ENCODE measurements at regions of chr3 and their contacts with region 1.

Region 1: DNA sequence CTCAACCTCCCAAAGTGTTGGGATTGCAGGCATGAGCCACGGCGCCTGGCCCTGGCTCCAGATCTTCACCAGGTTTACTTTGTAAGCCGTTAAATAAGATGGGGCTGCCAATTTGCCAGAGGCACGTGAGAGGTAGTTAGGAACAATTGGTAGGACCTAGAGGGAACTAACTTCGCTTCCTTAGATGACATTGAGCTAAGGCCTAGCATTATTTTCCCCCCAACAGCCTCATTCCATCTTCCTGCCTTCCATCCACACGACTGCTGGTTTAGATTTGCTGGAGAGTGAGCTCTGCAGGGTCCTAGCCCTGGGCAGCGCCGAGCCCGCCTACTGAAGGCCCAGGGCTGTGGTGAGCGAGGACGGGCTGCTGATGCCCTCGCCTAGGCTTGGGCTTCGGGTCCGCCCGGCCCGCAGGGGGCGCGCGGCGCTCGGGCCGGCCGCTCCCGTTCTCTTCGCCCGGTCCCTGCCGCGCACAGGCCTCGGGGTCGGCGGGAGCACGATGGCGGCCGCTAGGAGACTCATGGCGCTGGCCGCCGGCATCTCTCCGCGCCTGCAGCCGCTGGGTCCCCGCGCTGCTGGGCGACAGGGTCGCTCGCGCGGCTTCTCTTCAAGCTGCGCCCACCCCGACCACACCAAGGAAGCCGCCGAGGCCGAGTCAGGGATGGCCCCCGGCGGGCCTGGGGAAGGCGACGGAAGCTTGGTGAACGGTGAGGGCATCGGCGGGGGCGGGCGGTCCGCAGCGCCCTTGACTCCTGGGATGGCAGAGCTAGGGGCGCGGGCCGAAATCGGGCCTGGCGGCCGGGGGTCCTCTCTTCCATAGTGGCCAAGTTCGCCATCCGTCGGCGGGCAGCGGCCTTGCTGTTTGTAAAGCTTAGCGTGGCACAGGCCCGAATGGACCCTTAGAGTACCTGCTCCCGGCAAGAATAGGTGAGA is 21.9 kb downstream of the DHX30 start:
- DNase-seq: no peak
- H3K4me3 ChIP-seq: peak overlapping the region; percentile 93
- CTCF ChIP-seq: peak; percentile 62

Region 2: DNA sequence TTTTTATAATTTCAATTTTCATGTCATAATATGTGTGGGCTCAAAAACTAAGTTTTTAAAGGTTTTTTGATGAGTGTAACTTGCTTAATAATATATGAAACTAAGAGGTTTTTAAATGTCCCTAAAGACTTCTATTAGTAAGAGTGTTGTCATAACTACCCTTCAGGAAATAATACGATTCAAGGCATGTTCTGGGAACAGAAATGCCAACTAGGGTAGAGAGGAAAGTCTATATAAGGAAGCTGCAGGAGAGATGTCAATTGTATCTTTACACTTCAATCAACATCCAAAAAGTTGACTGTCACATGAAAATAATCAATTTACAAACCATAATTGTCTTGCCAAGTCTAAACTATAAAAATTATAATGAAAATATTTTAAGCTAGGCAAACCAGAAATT is 119.4 kb before region 1 on chr3:
- CTCF ChIA-PET with region 1: no interaction called
- POLR2A ChIA-PET with region 1: no interaction called
- DNase-seq: no peak
- H3K4me3 ChIP-seq: no peak overlapping the region
- CTCF ChIP-seq: no peak

Region 3: DNA sequence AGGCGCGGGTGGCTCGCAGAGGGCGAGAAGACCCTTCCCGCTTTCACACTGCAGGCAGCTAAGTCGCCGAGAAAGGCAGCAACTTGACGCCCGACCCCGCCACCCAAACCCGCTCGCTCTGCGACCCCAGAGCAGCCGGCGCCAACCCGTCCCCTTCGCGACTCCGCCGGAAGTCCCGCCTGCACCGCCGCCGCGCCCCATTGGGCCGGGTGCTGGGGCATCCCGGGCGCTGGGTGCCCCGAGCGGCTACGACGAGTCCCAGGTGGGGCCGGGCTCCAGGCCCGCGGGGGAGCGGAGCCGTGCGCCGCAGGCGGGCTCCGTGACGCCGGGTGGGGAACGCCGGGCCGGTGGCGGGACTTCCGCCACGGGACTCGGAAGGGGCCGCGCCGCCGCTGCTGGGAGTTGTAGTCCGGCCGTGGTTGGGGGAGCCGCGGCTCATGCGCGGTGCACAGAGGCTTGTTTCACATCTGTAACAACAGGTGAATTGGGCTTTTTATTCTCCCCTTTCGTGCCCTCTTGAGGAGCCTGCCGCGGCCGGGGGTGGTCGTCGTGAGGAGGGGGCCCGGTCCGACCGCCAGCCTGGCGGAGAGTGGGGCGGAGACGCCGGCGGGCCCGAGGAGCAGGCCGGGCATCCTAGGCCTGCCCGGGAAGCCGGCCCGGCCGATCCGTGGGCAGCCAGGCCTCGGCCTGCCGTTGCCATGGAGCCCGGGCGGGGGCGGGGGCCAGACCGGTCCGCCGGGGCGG is 21.9 kb before region 1 on chr3 and contains the start of gene DHX30:
- CTCF ChIA-PET with region 1: interaction called, 21 read pairs
- POLR2A ChIA-PET with region 1: no interaction called
- DNase-seq: no peak
- H3K4me3 ChIP-seq: peak within 1 kb of the TSS; percentile 86
- CTCF ChIP-seq: no peak

Region 4: GRCh38 chr3:47836986-47837385 is 12.2 kb after region 1 on chr3:
- CTCF ChIA-PET with region 1: interaction called, 123 read pairs
- POLR2A ChIA-PET with region 1: interaction called, 3 read pairs
- DNase-seq: no peak
- H3K4me3 ChIP-seq: no peak overlapping the region
- CTCF ChIP-seq: no peak

Region 5: GRCh38 chr3:47865192-47865591 is 40.4 kb after region 1 on chr3:
- CTCF ChIA-PET with region 1: interaction called, 10 read pairs
- POLR2A ChIA-PET with region 1: no interaction called
- DNase-seq: no peak
- H3K4me3 ChIP-seq: no peak overlapping the region
- CTCF ChIP-seq: no peak

Region 6: DNA sequence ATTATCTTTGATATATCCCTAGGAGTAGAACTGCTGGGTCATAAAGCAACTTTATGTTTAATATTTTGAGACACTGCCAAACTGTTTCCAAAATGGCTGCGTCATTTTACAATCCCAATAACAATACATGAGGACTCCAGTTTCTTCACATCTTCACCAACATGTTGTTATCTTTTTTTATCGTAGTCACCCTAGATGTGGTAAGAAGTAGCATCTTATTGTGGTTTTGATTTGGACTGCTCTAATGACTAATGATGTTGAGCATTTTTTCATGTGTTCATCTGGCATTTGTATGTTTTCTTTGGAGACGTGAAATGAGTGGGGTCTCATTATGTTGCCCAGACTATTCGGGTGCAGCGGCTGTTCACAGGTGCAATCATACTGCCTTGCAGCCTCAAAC is 107.6 kb after region 1 on chr3:
- CTCF ChIA-PET with region 1: no interaction called
- POLR2A ChIA-PET with region 1: no interaction called
- DNase-seq: no peak
- H3K4me3 ChIP-seq: no peak overlapping the region
- CTCF ChIP-seq: no peak

Region 7: GRCh38 chr3:48151058-48151806 is 326.4 kb after region 1 on chr3:
- CTCF ChIA-PET with region 1: interaction called, 61 read pairs
- POLR2A ChIA-PET with region 1: no interaction called
- DNase-seq: no peak
- H3K4me3 ChIP-seq: no peak overlapping the region
- CTCF ChIP-seq: peak; percentile 90